ENCODE measurements at regions of chr10 and their contacts with region 1.

Region 1: GRCh38 chr10:68550747-68551411 is 9.3 kb upstream of the TET1 start:
- DNase-seq: peak; percentile 74
- CTCF ChIP-seq: peak; percentile 73

Region 2: GRCh38 chr10:68537796-68538195 is 13.1 kb before region 1 on chr10:
- CTCF ChIA-PET with region 1: interaction called, 58 read pairs
- POLR2A ChIA-PET with region 1: no interaction called
- DNase-seq: no peak
- CTCF ChIP-seq: no peak

Region 3: GRCh38 chr10:68604441-68604840 is 53.6 kb after region 1 on chr10:
- CTCF ChIA-PET with region 1: interaction called, 10 read pairs
- POLR2A ChIA-PET with region 1: no interaction called
- DNase-seq: no peak
- CTCF ChIP-seq: no peak

Region 4: DNA sequence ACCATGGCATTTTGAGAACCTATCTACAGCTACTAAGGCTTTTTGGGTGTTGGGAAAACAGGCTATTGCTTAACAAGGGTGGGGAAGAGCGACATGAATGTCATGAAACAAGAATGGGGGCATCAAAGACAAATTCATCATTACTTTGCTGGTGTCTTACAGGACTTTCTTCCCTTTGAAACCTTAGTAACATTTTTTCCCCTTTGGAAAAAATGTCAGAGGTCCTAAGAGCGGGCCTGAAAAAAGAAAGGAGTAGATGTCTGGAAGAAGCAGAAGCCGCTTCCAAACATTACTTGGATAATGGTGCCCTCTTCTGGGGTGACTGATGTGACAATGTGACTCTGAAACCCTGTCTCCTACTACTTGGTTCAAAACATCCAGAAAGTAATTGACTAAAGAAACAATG is 346.5 kb after region 1 on chr10:
- CTCF ChIA-PET with region 1: interaction called, 12 read pairs
- POLR2A ChIA-PET with region 1: no interaction called
- DNase-seq: peak; percentile 39
- CTCF ChIP-seq: peak; percentile 37

Region 5: DNA sequence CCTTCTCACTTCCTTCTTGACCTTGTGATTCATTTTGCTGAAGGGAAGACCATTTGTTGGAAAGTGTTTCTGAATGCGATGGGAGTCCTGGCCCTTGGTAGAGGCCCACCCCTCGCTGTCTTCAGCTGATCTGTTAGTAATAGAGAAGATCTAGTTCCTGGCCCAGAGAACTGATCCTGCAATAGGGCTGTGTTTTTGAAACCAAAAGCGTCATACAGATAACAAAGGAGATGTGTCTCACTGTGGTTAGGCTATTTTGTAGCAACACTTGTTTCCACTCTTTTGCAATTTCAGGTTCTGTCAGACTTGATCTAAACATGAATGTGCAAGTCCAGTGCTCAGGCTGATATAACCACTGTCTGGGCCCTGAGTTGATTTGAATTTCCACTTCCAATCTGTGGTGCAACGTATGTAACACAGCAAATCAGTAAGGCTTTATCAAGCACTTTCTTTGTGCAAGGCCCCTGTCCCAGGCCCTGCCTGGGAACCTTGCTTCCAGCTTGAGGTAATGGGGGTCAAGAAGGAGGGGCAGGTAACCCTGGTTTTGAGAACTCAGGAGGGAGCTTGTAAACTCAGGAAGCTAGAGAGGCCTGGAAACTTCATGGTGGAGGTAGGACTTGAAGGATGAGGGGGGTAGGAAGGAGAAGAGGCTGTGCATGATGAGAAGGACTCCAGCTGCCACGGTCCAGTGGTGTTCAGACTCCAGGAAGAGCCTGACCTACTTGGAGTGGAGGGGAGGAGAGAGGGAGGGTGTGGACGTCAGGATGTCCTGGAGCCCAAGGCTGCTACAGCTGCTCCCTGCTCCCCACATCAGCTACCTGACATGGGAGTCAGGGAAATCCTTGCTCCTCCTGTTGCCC is 494.8 kb after region 1 on chr10:
- CTCF ChIA-PET with region 1: no interaction called
- POLR2A ChIA-PET with region 1: no interaction called
- DNase-seq: peak; percentile 72
- CTCF ChIP-seq: no peak